ENCODE measurements at regions of chr15 and their contacts with region 1.

Region 1: DNA sequence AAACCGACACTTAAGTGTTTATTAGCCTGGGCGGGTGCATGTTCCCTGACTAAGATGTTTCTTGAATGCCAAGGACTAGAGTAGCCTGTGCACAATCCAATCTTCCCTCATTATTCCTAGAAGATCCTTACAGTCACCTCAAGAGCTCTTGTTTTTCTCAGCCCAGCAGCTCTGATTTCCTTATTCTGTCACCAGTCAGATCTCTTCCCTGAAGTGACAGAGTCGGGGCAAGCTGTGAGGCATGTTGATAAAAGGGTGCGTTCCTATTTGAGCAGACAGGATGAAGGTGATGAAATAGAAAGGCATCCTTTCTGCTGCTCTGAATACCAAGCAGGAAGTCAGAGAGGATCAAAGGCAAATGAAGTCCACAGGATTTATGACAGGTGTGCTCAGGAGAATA is 125.6 kb upstream of the MCTP2 start:
- DNase-seq: no peak
- ATAC-seq: no peak
- H3K4me3 ChIP-seq: no peak overlapping the region
- H3K27ac ChIP-seq: no peak overlapping the region
- H3K4me1 ChIP-seq: no peaks in the 10 kb centered on the region
- H3K27me3 ChIP-seq: no peaks in the 10 kb centered on the region

Region 2: GRCh38 chr15:92797168-92797951 is 1308.4 kb before region 1 on chr15:
- intact Hi-C with region 1: loop called in 1 of 4 experiments (anchors 5 kb)
- DNase-seq: no peak
- ATAC-seq: peak; percentile 50 to 55
- H3K4me3 ChIP-seq: no peak overlapping the region
- H3K27ac ChIP-seq: no peak overlapping the region
- H3K4me1 ChIP-seq: peaks cover 3% of the 10 kb centered on the region
- H3K27me3 ChIP-seq: no peaks in the 10 kb centered on the region

Region 3: GRCh38 chr15:94526071-94526689 is 420.4 kb after region 1 on chr15:
- intact Hi-C with region 1: no loop called
- DNase-seq: no peak
- ATAC-seq: no peak
- H3K4me3 ChIP-seq: no peak overlapping the region
- H3K27ac ChIP-seq: no peak overlapping the region
- H3K4me1 ChIP-seq: no peaks in the 10 kb centered on the region
- H3K27me3 ChIP-seq: no peaks in the 10 kb centered on the region

Measured in right cardiac atrium (tissue), 5 donors.